Gastrocnemius medialis (tissue), 4 donors: ENCODE measurements at regions of chr22 and their contacts with region 1.

Region 1: GRCh38 chr22:23849009-23850006 is 8.4 kb upstream of the SLC2A11 start:
- DNase-seq: peak; percentile 53 to 77
- ATAC-seq: peak; percentile 58 to 72
- H3K4me3 ChIP-seq: peak overlapping the region in 2 of 4 donors; percentile 8 to 16
- H3K27ac ChIP-seq: no peak overlapping the region
- H3K4me1 ChIP-seq: peaks cover 26 to 34% of the 10 kb centered on the region in 2 donors
- H3K27me3 ChIP-seq: no peaks in the 10 kb centered on the region
- CTCF ChIP-seq: peak; percentile 95 to 100 (median 99)
- POLR2A ChIP-seq: no peak

Region 2: DNA sequence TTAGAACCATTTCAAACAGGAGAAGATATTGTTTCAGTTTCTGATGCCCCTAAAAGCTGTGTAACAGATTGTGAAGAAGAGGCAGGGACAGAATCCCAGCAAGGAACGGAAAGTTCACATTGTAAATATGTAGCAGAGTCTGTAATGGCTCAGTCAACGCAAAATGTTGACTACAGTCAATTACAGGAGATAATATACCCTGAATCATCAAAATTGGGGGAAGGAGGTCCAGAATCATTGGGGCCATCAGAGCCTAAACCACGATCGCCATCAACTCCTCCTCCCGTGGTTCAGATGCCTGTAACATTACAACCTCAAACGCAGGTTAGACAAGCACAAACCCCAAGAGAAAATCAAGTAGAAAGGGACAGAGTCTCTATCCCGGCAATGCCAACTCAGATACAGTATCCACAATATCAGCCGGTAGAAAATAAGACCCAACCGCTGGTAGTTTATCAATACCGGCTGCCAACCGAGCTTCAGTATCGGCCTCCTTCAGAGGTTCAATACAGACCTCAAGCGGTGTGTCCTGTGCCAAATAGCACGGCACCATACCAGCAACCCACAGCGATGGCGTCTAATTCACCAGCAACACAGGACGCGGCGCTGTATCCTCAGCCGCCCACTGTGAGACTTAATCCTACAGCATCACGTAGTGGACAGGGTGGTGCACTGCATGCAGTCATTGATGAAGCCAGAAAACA is 310.0 kb before region 1 on chr22:
- in situ Hi-C with region 1: loop called in 3 of 4 experiments (anchors 10 to 25 kb)
- intact Hi-C with region 1: loop called (anchors 5 kb)
- DNase-seq: peak; percentile 45 to 61
- ATAC-seq: peak; percentile 92 to 98
- H3K4me3 ChIP-seq: no peak overlapping the region
- H3K27ac ChIP-seq: no peak overlapping the region
- H3K4me1 ChIP-seq: peaks cover 0 to 9% of the 10 kb centered on the region in 2 donors
- H3K27me3 ChIP-seq: no peaks in the 10 kb centered on the region
- CTCF ChIP-seq: peak; percentile 75 to 86 (median 80)
- POLR2A ChIP-seq: no peak

Region 3: DNA sequence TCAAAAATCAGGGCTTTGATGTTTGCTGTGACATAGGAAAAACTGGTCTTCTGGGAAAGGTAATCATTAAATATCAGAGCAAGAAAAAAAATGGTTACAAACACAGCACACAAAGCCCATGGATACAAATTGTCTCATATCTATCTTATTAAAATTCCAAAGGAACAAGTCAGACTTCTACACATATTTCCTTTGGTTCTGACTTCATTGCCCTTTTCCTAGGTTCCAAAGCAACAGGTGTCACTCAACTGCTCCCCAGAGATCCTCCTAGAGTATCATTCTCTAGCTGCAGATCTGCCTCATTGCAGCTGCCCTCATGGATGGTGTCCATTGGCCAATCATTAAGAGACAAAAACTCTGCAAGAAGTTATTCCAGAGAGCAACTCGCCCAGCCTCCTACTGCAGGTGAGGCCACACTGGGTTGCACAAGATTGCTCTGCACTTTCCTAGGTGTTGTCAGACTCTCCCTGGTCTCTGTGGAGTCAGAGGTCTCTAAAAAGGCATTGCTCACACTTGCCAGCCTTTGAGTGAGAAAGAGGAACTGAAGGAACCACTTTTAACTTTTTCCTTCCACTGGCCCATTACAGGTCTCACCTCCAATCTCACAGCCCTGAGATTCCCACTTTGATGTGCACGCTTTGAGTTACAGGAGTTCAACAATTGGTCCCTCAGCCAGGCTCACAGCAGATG is 222.9 kb before region 1 on chr22:
- in situ Hi-C with region 1: no loop called
- intact Hi-C with region 1: loop called (anchors 5 kb)
- DNase-seq: no peak
- ATAC-seq: no peak
- H3K4me3 ChIP-seq: no peak overlapping the region
- H3K27ac ChIP-seq: no peak overlapping the region
- H3K4me1 ChIP-seq: peaks cover 0 to 6% of the 10 kb centered on the region in 2 donors
- H3K27me3 ChIP-seq: no peaks in the 10 kb centered on the region
- CTCF ChIP-seq: no peak
- POLR2A ChIP-seq: no peak

Region 4: GRCh38 chr22:23716811-23717801 is 132.2 kb before region 1 on chr22:
- in situ Hi-C with region 1: no loop called
- intact Hi-C with region 1: loop called (anchors 5 kb)
- DNase-seq: peak; percentile 66 to 81
- ATAC-seq: peak; percentile 91
- H3K4me3 ChIP-seq: peak overlapping the region; percentile 96 to 99 (median 98)
- H3K27ac ChIP-seq: peak overlapping the region; percentile 85 to 93 (median 90)
- H3K4me1 ChIP-seq: peaks cover 11 to 15% of the 10 kb centered on the region in 2 donors
- H3K27me3 ChIP-seq: no peaks in the 10 kb centered on the region
- CTCF ChIP-seq: no peak
- POLR2A ChIP-seq: peak; percentile 88 to 94

Region 5: GRCh38 chr22:23781511-23782315 is 67.6 kb before region 1 on chr22:
- in situ Hi-C with region 1: loop called in 2 of 4 experiments (anchors 5 to 10 kb)
- intact Hi-C with region 1: no loop called
- DNase-seq: no peak
- ATAC-seq: no peak
- H3K4me3 ChIP-seq: no peak overlapping the region
- H3K27ac ChIP-seq: no peak overlapping the region
- H3K4me1 ChIP-seq: peaks cover 6 to 11% of the 10 kb centered on the region in 2 donors
- H3K27me3 ChIP-seq: no peaks in the 10 kb centered on the region
- CTCF ChIP-seq: no peak
- POLR2A ChIP-seq: no peak

Region 6: GRCh38 chr22:24060375-24060788 is 211.1 kb after region 1 on chr22:
- in situ Hi-C with region 1: no loop called
- intact Hi-C with region 1: no loop called
- DNase-seq: no peak
- ATAC-seq: peak; percentile 50 to 51
- H3K4me3 ChIP-seq: no peak overlapping the region
- H3K27ac ChIP-seq: peak overlapping the region in 3 of 4 donors; percentile 31 to 49 (median 33)
- H3K4me1 ChIP-seq: no peaks in the 10 kb centered on the region
- H3K27me3 ChIP-seq: no peaks in the 10 kb centered on the region
- CTCF ChIP-seq: no peak
- POLR2A ChIP-seq: no peak